Activated naive CD4-positive, alpha-beta T cell treated with anti-CD3 and anti-CD28 coated beads for 36 hours (primary cell): ENCODE measurements at regions of chr19 and their contacts with region 1.

Region 1: GRCh38 chr19:54159352-54160181 is at the start of gene LENG1:
- DNase-seq: peak; percentile 100
- H3K4me3 Mint-ChIP-seq: peak within 1 kb of the TSS; percentile 100
- H3K27ac Mint-ChIP-seq: peak within 1 kb of the TSS; percentile 99
- H3K4me1 Mint-ChIP-seq: peaks cover 58% of the 10 kb centered on the region
- H3K27me3 Mint-ChIP-seq: peaks cover 7% of the 10 kb centered on the region
- total RNA-seq, gene LENG1: 4.7 to 5.6 TPM

Region 2: DNA sequence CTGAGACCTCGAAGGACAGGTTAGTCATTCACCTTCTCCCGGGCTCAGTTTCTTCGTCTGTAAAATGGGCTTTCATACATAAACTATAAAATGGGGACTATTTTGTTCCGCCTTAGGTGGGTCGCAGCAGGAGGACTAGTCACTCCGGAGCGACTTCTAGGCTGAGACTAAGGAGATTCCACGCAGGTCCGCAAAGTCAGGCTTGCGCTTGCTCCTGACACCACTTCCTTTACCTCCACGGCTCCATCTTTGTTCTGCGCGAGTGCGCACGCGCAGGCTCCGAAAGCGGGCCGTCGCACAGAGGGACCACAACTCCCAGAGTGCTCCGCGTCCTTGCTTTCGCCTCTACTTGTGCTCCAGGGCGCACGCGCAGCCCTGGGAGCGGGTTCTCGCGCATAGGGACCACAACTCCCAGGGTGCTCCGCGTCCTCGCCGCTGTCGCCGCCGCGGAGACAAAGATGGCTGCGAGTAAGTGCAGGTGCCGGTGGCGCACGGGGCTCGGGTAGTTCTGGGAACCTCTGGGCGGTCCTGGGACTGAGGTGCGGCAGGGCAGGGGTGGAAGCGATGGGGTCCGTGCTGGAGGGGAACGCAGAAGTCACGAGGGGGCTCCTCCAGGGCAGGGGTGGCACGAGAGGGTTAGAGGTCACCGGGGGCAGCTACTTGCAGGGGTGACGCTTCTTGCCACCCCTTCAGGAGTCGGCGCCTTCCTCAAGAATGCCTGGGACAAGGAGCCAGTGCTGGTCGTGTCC is 57.0 kb before region 1 on chr19 and contains the start of gene NDUFA3:
- CTCF ChIA-PET with region 1: no interaction called
- intact Hi-C with region 1: loop called (anchors 1 kb)
- DNase-seq: peak; percentile 98
- H3K4me3 Mint-ChIP-seq: peak within 1 kb of the TSS; percentile 99
- H3K27ac Mint-ChIP-seq: peak within 1 kb of the TSS; percentile 92
- H3K4me1 Mint-ChIP-seq: peaks cover 28% of the 10 kb centered on the region
- H3K27me3 Mint-ChIP-seq: no peaks in the 10 kb centered on the region
- total RNA-seq, gene NDUFA3: 110 to 120 TPM

Region 3: GRCh38 chr19:54115109-54116063 is 44.2 kb before region 1 on chr19 and contains the starts of genes PRPF31 and TFPT:
- CTCF ChIA-PET with region 1: no interaction called
- intact Hi-C with region 1: loop called (anchors 1 kb)
- DNase-seq: peak; percentile 99
- H3K4me3 Mint-ChIP-seq: peak within 1 kb of the TSS; percentile 90
- H3K27ac Mint-ChIP-seq: peak within 1 kb of the TSS; percentile 97
- H3K4me1 Mint-ChIP-seq: peaks cover 30% of the 10 kb centered on the region
- H3K27me3 Mint-ChIP-seq: no peaks in the 10 kb centered on the region
- total RNA-seq, gene PRPF31: 67.5 to 71.8 TPM
- total RNA-seq, gene TFPT: 17.0 to 17.3 TPM

Region 4: DNA sequence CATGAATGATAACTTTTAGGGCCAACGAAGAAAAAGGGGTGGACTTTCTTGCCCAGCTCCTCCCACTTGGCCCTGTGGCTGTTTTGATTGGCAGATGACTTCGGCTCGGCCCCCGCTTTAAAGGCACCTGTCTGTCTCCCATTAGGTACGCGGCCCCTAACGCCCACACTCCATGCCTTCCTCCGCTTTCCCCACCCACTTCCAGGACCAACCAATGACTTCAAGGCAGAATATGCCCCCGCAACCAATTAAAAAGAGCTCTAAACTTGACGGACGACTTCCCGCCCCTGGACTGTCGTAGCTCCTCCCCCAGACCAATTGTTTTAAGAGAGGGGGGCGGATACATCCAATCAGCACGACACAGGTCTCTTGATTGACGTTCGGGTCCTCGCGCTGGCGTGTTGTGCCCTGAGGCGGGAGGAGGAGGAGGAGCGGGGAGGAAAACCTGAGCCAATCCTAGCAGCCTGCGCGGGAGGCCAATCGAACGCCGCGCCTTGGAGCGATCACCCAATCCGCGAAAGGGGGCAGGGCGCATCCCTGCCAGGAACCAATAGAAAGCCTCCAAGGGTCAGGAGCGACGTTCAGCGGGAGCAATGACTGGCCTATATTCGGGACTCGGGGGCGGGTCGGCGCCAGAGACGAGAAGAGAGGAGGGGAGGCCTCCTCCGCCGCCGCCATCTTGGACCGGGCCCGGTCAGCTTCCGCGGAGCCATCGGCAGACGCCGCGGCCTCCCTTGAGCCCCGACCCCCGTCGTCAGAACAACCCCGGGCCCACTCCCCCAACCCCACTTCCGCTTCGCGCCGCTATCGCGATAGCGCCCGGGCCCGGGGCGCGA is 22.3 kb before region 1 on chr19 and contains the start of gene CNOT3:
- CTCF ChIA-PET with region 1: interaction called, 3 read pairs
- intact Hi-C with region 1: loop called (anchors 1 kb)
- DNase-seq: peak; percentile 100
- H3K4me3 Mint-ChIP-seq: peak within 1 kb of the TSS; percentile 83
- H3K27ac Mint-ChIP-seq: peak within 1 kb of the TSS; percentile 89
- H3K4me1 Mint-ChIP-seq: peaks cover 39% of the 10 kb centered on the region
- H3K27me3 Mint-ChIP-seq: no peaks in the 10 kb centered on the region
- total RNA-seq, gene CNOT3: 50.4 to 58.3 TPM

Region 5: GRCh38 chr19:54179921-54180461 is 20.4 kb after region 1 on chr19:
- CTCF ChIA-PET with region 1: no interaction called
- intact Hi-C with region 1: no loop called
- DNase-seq: no peak
- H3K4me3 Mint-ChIP-seq: no peak overlapping the region
- H3K27ac Mint-ChIP-seq: no peak overlapping the region
- H3K4me1 Mint-ChIP-seq: no peaks in the 10 kb centered on the region
- H3K27me3 Mint-ChIP-seq: no peaks in the 10 kb centered on the region

Region 6: DNA sequence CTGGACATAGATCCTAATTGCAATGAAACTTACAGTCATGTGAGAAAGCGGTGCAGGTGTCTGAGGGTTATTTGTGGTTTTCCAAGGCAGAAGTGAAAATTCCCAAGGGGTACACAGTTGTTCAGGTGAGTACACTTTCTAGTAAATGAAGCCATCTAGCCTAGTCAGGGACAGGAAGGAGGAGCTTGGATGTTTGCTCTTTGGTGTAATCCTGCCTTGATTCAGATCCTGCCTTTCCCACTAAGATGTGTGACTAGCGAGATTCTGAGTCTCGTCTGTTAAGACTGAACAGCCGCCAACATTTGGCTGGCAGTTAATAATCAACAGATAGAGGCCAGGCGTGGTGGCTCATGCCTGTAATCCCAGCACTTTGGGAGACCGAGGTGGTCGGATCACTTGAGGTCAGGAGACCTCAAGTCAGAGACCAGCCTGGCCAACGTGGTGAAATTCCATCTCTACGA is 43.6 kb after region 1 on chr19:
- CTCF ChIA-PET with region 1: no interaction called
- intact Hi-C with region 1: loop called (anchors 1 kb)
- DNase-seq: no peak
- H3K4me3 Mint-ChIP-seq: peak overlapping the region; percentile 99
- H3K27ac Mint-ChIP-seq: peak overlapping the region; percentile 53
- H3K4me1 Mint-ChIP-seq: peaks cover 74% of the 10 kb centered on the region
- H3K27me3 Mint-ChIP-seq: no peaks in the 10 kb centered on the region

Region 7: GRCh38 chr19:54573330-54573872 is 413.8 kb after region 1 on chr19 and contains the start of gene LILRA2:
- CTCF ChIA-PET with region 1: no interaction called
- intact Hi-C with region 1: no loop called
- DNase-seq: no peak
- H3K4me3 Mint-ChIP-seq: no peak within 1 kb of the TSS
- H3K27ac Mint-ChIP-seq: no peak within 1 kb of the TSS
- H3K4me1 Mint-ChIP-seq: no peaks in the 10 kb centered on the region
- H3K27me3 Mint-ChIP-seq: peaks cover 41% of the 10 kb centered on the region
- total RNA-seq, gene LILRA2: not detected